ENCODE measurements at regions of chr2 and their contacts with region 1.

Region 1: DNA sequence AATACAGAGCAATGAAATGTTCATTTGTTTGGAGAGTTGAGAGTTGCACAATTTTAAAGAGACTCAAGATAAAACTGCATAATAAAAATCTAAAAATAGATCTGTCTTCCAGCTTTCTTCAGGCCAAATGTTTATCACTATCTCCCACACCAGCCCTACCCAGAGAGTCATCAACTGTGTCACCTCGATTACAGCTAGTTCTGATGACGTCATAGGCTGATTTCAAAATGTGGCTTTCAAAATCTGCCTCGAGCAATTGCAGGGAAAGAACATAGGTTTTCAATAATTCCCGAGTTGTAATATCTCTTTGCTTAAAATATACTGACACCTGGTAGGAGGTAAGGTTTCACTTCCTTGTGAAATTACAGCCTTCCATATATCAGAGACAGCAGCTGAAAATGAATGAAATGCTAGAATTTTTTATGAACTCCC is 677.6 kb upstream of the ID2 start:
- DNase-seq: peak in 1 of 2 donors; percentile 26
- ATAC-seq: peak; percentile 70 to 88 (median 74)
- H3K4me3 ChIP-seq: peak overlapping the region in 1 of 10 donors; percentile 3
- H3K27ac ChIP-seq: peak overlapping the region; percentile 35 to 85 (median 75)
- H3K4me1 ChIP-seq: peaks cover 3 to 30% (median 22%) of the 10 kb centered on the region in 9 donors
- H3K27me3 ChIP-seq: no peaks in the 10 kb centered on the region
- CTCF ChIP-seq: no peak

Region 2: DNA sequence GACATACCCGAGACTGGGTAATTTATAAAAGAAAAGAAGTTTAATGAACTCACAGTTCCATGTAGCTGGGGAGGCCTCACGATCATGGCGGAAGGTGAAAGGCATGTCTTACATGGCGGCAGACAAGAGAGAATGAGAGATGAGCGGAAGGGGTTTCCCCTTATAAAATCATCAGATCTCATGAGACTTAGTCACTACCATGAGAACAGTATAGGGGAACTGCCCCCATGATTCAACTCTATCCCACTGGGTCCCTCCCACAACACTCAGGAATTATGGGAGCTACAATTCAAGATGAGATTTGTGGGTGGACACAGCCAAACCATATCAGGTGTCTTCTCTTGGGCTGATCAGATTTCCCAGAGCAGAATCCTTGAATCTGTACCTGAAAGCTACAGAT is 60.3 kb after region 1 on chr2:
- intact Hi-C with region 1: no loop called
- DNase-seq: no peak
- ATAC-seq: no peak
- H3K4me3 ChIP-seq: no peak overlapping the region
- H3K27ac ChIP-seq: no peak overlapping the region
- H3K4me1 ChIP-seq: no peaks in the 10 kb centered on the region
- H3K27me3 ChIP-seq: no peaks in the 10 kb centered on the region
- CTCF ChIP-seq: no peak

Region 3: DNA sequence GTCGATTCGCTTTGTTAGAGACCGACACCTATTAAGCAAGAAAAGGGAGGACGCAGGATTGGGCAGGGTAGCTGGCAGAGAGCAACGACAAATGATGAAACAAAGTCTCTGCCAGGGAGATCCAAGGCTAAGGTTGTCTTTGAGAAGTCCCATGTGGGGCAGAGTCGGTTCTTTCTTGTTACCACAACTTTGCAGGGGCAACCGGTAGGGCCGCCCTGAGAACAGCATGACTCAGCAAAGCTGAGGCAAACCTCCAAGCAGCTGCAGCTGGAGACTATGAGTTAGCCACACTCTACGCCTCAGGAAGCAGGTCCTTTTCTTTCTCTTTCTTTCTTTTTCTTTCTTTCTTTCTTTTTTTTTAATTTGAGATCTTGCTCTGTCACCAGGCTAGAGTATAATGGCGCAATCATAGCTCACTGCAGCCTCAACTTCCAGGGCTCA is 225.3 kb after region 1 on chr2:
- intact Hi-C with region 1: loop called in 1 of 10 experiments (anchors 10 kb)
- DNase-seq: peak; percentile 39 to 51
- ATAC-seq: peak; percentile 45 to 86 (median 64)
- H3K4me3 ChIP-seq: no peak overlapping the region
- H3K27ac ChIP-seq: peak overlapping the region in 2 of 10 donors; percentile 2 to 18
- H3K4me1 ChIP-seq: peaks cover 0 to 30% (median 23%) of the 10 kb centered on the region in 9 donors
- H3K27me3 ChIP-seq: no peaks in the 10 kb centered on the region
- CTCF ChIP-seq: no peak